Heart right ventricle (tissue), 16 donors: ENCODE measurements at regions of chr7 and their contacts with region 1.

Region 1: GRCh38 chr7:17402628-17403278 is 104.3 kb downstream of the AHR start:
- DNase-seq: no peak
- ATAC-seq: no peak
- H3K4me3 ChIP-seq: no peak overlapping the region
- H3K27ac ChIP-seq: no peak overlapping the region
- H3K4me1 ChIP-seq: peaks cover 0 to 49% (median 0%) of the 10 kb centered on the region in 9 donors
- H3K27me3 ChIP-seq: no peaks in the 10 kb centered on the region
- CTCF ChIP-seq: no peak

Region 2: GRCh38 chr7:17247357-17247756 is 155.4 kb before region 1 on chr7:
- intact Hi-C with region 1: no loop called
- DNase-seq: no peak
- ATAC-seq: no peak
- H3K4me3 ChIP-seq: no peak overlapping the region
- H3K27ac ChIP-seq: no peak overlapping the region
- H3K4me1 ChIP-seq: no peaks in the 10 kb centered on the region
- H3K27me3 ChIP-seq: no peaks in the 10 kb centered on the region
- CTCF ChIP-seq: no peak

Region 3: DNA sequence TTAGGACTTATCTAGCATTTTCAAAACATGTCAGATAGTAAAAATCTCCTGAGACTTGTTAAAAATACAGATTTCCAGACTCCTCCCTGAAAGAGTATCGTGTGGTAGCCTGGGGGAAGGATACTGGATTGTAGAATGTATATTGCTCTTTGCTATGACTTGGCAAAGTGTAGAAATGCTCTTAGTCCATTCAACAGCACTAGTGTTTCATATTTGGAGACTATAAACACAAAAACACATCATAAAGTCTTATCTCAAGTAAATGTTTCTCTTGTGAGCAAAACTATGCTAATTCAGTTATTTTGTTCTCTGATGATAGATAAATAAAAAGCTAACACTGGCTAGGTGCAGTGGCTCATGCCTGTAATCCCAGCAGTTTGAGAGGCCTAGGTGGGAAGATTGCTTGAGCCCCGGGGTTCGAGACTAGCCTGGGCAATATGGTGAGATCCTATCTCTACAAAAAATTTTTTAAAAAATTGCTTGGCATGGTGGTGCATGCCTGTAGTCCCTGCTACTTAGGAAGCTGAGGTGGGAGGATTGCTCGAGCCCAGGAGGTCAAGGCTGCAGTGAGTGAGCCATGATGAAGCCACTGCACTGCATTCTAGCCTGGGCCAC is 762.5 kb after region 1 on chr7:
- intact Hi-C with region 1: loop called in 1 of 10 experiments (anchors 5 kb)
- DNase-seq: no peak
- ATAC-seq: no peak
- H3K4me3 ChIP-seq: no peak overlapping the region
- H3K27ac ChIP-seq: no peak overlapping the region
- H3K4me1 ChIP-seq: peaks cover 0 to 14% (median 3%) of the 10 kb centered on the region in 9 donors
- H3K27me3 ChIP-seq: no peaks in the 10 kb centered on the region
- CTCF ChIP-seq: no peak